Endothelial cell of umbilical vein (primary cell): ENCODE measurements at regions of chrX and their contacts with region 1.

Region 1: DNA sequence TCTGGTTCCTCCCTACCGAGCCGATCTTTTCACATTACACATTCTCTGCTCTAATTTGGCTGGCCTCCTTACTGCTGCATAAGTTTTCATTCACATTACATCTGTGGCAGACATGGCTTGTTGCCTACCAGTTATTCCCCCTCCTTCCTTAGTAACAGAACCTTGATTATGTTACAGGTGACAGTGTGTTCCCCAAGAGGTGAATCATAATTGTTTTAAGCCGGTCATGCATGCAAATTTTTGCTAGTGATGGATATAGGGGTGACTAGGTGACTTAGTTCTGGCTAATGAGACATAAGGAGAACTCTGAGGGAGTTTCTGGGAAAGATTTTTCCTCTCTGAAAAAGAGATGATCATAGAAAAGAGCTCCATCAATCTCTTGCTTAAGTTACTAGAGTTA is 8.4 kb upstream of the LAMP2 start:
- DNase-seq: no peak
- H3K4me3 ChIP-seq: no peak overlapping the region
- H3K27ac ChIP-seq: no peak overlapping the region
- H3K4me1 ChIP-seq: no peaks in the 10 kb centered on the region
- H3K27me3 ChIP-seq: no peaks in the 10 kb centered on the region
- CTCF ChIP-seq: no peak
- POLR2A ChIP-seq: no peak

Region 2: DNA sequence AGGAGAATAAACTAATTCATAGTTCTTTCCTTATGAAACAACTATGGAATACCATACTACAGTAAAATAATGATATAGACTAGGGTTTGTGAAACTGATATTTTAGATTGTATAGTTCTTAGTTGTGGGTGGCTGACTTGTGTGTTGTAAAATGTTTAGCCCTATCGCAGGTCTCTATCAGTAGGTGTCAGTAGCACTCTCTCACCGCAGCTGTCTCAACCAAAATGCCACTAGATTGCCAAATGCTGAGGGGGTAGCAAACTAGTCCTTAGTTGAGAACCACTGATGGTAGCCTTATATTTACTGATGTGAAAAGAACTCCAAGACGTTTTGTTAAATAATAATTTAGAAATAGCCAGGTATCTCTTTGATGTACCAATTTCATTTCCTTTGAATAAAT is 448.1 kb before region 1 on chrX:
- CTCF ChIA-PET with region 1: no interaction called
- POLR2A ChIA-PET with region 1: no interaction called
- dilution Hi-C with region 1: no loop called
- intact Hi-C with region 1: no loop called
- DNase-seq: no peak
- H3K4me3 ChIP-seq: no peak overlapping the region
- H3K27ac ChIP-seq: no peak overlapping the region
- H3K4me1 ChIP-seq: no peaks in the 10 kb centered on the region
- H3K27me3 ChIP-seq: no peaks in the 10 kb centered on the region
- CTCF ChIP-seq: no peak
- POLR2A ChIP-seq: no peak

Region 3: DNA sequence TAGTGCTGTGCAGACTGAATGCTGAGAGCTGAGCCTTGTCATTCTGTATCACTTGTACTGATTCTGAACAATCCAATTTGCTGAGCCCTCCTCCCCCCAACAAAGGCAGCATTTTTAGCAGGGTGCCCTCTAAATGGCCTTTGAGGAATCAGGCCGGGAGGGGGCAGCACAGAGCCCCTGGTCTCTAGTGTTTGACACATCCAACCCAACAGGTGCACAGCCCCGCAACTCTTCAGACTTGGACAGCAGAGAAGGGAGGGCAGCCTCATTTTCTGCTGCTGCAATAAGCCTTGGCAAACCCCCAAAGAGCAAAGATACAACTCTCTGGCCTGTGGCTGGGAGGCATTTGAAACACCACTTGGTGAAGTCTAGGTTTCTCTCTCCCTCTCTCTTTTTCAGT is 112.1 kb before region 1 on chrX:
- CTCF ChIA-PET with region 1: interaction called, 15 read pairs
- POLR2A ChIA-PET with region 1: no interaction called
- dilution Hi-C with region 1: no loop called
- intact Hi-C with region 1: loop called (anchors 1 kb)
- DNase-seq: peak; percentile 13
- H3K4me3 ChIP-seq: no peak overlapping the region
- H3K27ac ChIP-seq: no peak overlapping the region
- H3K4me1 ChIP-seq: no peaks in the 10 kb centered on the region
- H3K27me3 ChIP-seq: no peaks in the 10 kb centered on the region
- CTCF ChIP-seq: peak; percentile 27 to 58
- POLR2A ChIP-seq: no peak

Region 4: GRCh38 chrX:120380699-120381098 is 96.8 kb before region 1 on chrX:
- CTCF ChIA-PET with region 1: interaction called, 25 read pairs
- POLR2A ChIA-PET with region 1: no interaction called
- dilution Hi-C with region 1: no loop called
- intact Hi-C with region 1: loop called (anchors 1 kb)
- DNase-seq: peak; percentile 2
- H3K4me3 ChIP-seq: no peak overlapping the region
- H3K27ac ChIP-seq: no peak overlapping the region
- H3K4me1 ChIP-seq: no peaks in the 10 kb centered on the region
- H3K27me3 ChIP-seq: peaks cover 3 to 5% of the 10 kb centered on the region in 2 experiments
- CTCF ChIP-seq: peak; percentile 15 to 23
- POLR2A ChIP-seq: no peak

Region 5: DNA sequence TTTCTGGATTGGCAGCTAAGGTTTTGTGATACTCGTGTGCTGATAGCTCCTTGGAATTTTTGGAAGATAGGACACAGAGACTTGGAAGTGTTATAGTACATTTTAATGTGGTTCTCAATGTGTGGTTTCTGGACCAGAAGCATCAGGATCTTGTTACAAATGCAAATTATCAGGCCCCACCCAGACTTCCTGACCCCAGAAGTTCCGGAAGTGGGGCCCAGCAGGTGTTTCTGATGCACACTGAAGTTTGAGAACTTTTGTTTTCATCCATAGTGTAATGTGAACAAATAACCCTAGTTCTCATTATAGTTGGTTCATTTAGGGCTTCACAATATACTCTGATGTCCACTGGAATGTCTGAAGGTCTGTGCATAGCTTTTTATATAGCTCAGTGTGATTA is 58.0 kb before region 1 on chrX:
- CTCF ChIA-PET with region 1: no interaction called
- POLR2A ChIA-PET with region 1: no interaction called
- dilution Hi-C with region 1: no loop called
- intact Hi-C with region 1: no loop called
- DNase-seq: no peak
- H3K4me3 ChIP-seq: no peak overlapping the region
- H3K27ac ChIP-seq: no peak overlapping the region
- H3K4me1 ChIP-seq: no peaks in the 10 kb centered on the region
- H3K27me3 ChIP-seq: no peaks in the 10 kb centered on the region
- CTCF ChIP-seq: no peak
- POLR2A ChIP-seq: no peak